Mammary epithelial cell (primary cell): ENCODE measurements at regions of chr13 and their contacts with region 1.

Region 1: DNA sequence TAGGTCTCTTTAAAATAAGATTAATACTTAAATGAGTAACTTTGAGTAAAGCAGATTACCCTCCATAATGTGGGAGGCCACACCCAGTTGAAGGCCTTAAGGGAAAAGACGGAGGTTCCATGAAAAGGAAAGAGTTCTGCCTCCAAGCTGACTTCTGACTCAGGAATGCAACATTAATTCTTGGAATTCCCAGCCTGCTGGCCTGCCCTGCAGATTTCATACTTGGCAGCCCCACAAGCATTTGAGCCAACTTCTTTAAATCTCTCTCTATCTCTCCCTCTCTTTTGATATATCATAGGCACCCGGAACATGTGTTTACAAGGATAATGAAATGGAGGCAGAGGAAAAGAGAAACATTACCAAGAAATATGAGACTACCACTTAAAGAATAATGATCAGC is 902.3 kb upstream of the MIR17HG start:
- DNase-seq: peak; percentile 80
- H3K4me3 ChIP-seq: no peak overlapping the region
- H3K27ac ChIP-seq: peak overlapping the region; percentile 42
- H3K4me1 ChIP-seq: peaks cover 28% of the 10 kb centered on the region
- H3K27me3 ChIP-seq: no peaks in the 10 kb centered on the region
- CTCF ChIP-seq: no peak

Region 2: DNA sequence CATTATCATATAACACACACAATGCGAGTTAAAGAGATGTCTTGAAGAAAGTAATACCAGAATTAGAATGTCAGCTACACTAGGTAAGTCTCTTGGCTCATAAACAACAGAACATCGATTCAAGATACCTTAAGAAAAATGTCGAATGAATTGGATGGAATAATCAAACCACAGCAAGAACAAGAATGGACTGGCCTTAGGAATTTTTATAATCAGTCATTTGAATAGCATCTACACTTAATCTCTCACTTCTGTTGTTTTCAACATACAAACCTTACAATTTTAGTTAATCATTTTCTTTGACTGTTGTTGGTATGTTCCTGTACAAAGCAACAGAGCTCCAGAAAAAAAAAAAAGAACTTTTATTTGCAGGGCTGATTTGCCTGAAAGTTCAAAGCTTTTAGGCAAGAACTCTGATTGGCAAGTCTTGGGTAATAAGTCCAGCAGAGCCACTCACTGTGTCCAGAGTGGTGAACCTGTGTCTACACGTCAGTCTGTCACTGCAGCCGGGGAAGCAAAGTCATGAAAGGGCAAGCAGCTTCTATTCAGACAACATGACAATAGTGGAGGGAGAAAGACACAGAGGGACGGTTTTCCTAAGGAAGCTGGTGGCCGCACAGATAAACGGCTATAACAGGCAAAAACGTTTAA is 123.8 kb before region 1 on chr13:
- CTCF ChIA-PET with region 1: no interaction called
- dilution Hi-C with region 1: no loop called
- in situ Hi-C with region 1: no loop called
- intact Hi-C with region 1: loop called (anchors 5 kb)
- DNase-seq: peak; percentile 50
- H3K4me3 ChIP-seq: no peak overlapping the region
- H3K27ac ChIP-seq: no peak overlapping the region
- H3K4me1 ChIP-seq: peaks cover 8% of the 10 kb centered on the region
- H3K27me3 ChIP-seq: no peaks in the 10 kb centered on the region
- CTCF ChIP-seq: no peak

Region 3: DNA sequence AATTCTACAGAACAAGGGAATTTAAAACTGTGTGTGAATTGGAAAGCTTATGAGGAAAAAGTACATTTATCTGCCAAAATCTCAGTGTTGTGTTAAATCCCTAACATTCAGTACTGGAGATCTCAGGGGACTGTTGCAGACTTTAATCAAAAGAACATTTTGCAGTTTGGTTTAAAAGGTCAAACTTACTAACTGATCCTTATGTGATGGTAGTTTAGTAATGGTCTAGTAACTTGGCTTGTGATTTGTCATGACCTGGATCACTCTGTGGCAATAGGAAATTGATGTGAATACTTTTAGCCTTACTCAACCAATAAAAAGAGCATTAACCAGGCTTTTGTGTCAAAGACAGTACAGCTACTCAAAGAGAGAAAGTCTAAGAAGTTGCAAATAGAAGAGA is 40.3 kb after region 1 on chr13:
- CTCF ChIA-PET with region 1: no interaction called
- dilution Hi-C with region 1: no loop called
- in situ Hi-C with region 1: no loop called
- intact Hi-C with region 1: loop called (anchors 2 kb)
- DNase-seq: peak; percentile 80
- H3K4me3 ChIP-seq: no peak overlapping the region
- H3K27ac ChIP-seq: no peak overlapping the region
- H3K4me1 ChIP-seq: no peaks in the 10 kb centered on the region
- H3K27me3 ChIP-seq: no peaks in the 10 kb centered on the region
- CTCF ChIP-seq: no peak